ENCODE measurements at regions of chr17 and their contacts with region 1.

Region 1: DNA sequence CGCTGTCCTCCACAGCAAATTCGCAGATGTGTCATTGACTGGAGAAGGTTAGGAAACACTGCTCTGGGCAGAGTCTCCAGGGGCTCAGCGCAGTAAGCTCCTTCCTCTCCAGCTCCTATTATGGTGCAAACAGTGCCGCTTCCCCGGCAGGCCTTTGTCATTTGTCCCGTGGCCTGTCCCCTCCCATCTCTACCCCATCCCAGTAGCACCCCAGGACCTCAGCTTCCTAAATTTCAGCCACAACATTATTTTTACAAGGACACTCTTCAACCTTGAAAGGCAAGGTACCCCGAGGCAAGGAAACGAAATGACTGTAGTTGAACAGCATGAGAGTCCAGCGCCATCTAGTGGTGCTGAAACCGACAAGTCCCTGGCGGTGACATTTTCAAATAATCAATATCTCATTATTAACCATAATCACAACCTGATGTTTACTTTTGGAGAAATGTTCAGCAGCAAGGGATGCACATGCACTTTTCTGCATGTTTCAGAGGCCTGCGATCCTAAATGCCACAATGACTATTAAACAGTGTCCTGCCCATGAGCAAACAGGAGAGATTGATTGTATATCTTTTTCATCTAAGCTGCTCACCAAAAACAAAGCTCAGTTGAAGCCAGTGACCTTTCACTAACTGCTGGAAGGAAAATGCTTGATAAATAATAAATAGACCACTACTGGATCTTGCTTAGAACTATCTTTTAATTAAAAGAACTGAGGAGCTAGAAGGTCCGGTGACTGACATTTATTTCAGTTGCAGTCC is 16.5 kb downstream of the MRPS23 start:
- DNase-seq: no peak
- H3K4me3 ChIP-seq: peak overlapping the region in 3 of 4 donors; percentile 37 to 64 (median 39)
- H3K27ac ChIP-seq: peak overlapping the region in 3 of 4 donors; percentile 70 to 80 (median 77)
- H3K4me1 ChIP-seq: peaks cover 0 to 33% (median 11%) of the 10 kb centered on the region in 3 donors
- H3K27me3 ChIP-seq: no peaks in the 10 kb centered on the region
- CTCF ChIP-seq: peak; percentile 77 to 88 (median 82)
- POLR2A ChIP-seq: no peak

Region 2: GRCh38 chr17:57121338-57122042 is 711.9 kb before region 1 on chr17:
- intact Hi-C with region 1: loop called (anchors 10 kb)
- DNase-seq: no peak
- H3K4me3 ChIP-seq: no peak overlapping the region
- H3K27ac ChIP-seq: no peak overlapping the region
- H3K4me1 ChIP-seq: no peaks in the 10 kb centered on the region
- H3K27me3 ChIP-seq: no peaks in the 10 kb centered on the region
- CTCF ChIP-seq: peak in 3 of 6 experiments; percentile 21 to 33 (median 29)
- POLR2A ChIP-seq: no peak

Region 3: DNA sequence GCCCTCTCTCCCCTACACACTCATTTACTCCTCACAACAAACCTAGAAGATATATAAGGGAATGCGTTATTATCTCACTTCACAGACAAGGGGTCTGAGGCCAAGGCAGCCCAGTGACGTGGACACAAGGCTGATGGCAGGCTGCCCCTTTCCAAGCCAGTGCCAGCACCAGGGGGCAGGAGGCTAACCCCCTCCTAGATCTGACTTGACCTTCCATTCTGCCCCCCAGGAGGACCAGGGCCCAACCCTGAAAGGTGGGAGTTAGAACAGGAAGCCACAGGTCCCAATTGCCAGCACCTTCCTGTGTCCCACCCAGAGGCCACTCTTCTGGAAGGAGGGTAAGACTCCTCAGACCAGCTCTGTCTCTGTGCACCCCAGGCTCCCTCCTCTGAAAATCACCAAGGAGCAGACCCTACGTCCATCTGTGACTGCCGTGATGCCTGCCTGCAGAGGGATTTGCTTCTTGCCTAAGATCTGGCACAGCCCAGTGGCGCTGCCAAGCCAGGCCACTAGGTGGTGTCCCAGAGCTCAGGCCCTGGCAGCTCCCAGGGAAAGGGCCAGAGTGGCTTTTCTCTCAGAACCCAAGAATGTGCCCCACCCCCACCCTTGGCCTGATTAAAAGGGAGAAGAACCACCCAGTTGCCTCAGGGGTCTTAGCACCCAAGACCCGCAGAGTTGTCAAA is 58.9 kb after region 1 on chr17:
- intact Hi-C with region 1: no loop called
- DNase-seq: peak; percentile 33
- H3K4me3 ChIP-seq: peak overlapping the region in 1 of 4 donors; percentile 45
- H3K27ac ChIP-seq: peak overlapping the region; percentile 85 to 96 (median 94)
- H3K4me1 ChIP-seq: peaks cover 53 to 89% (median 71%) of the 10 kb centered on the region in 3 donors
- H3K27me3 ChIP-seq: no peaks in the 10 kb centered on the region
- CTCF ChIP-seq: peak; percentile 95 to 99 (median 98)
- POLR2A ChIP-seq: no peak